CD14-positive monocyte (primary cell): ENCODE measurements at regions of chr15 and their contacts with region 1.

Region 1: GRCh38 chr15:52445553-52445952 is 83.1 kb downstream of the MYO5A start:
- DNase-seq: peak; percentile 24 to 46 (median 43)
- H3K4me3 ChIP-seq: peak overlapping the region in 1 of 3 experiments; percentile 12
- H3K4me3 Mint-ChIP-seq: no peak overlapping the region
- H3K27ac ChIP-seq: peak overlapping the region; percentile 6 to 53
- H3K27ac Mint-ChIP-seq: peak overlapping the region; percentile 47 to 84 (median 75)
- H3K4me1 ChIP-seq: peaks cover 49 to 66% of the 10 kb centered on the region in 2 donors
- H3K4me1 Mint-ChIP-seq: peaks cover 72% of the 10 kb centered on the region
- H3K27me3 ChIP-seq: no peaks in the 10 kb centered on the region
- H3K27me3 Mint-ChIP-seq: no peaks in the 10 kb centered on the region
- CTCF ChIP-seq: no peak

Region 2: DNA sequence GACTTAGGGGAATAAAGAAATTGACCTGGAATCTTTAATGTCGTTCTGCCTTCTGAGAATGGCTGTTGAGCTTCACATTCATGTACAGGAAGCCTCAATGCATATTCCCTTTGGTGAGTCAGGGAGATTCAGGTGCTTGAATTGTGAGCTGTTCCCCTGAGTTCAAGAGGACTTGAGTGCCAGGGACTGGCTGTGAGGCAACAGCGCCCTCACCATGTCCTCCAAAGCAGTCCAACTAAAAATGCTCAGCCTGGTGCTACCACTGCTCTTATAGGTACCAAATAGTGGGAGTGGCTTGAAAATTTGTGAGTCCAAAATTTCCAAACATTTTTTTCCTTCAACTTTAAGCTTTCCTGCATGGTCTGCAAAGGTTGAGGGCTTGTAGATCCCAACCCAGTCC is 528.1 kb before region 1 on chr15:
- intact Hi-C with region 1: no loop called
- DNase-seq: no peak
- H3K4me3 ChIP-seq: no peak overlapping the region
- H3K4me3 Mint-ChIP-seq: no peak overlapping the region
- H3K27ac ChIP-seq: no peak overlapping the region
- H3K27ac Mint-ChIP-seq: no peak overlapping the region
- H3K4me1 ChIP-seq: no peaks in the 10 kb centered on the region
- H3K4me1 Mint-ChIP-seq: no peaks in the 10 kb centered on the region
- H3K27me3 ChIP-seq: no peaks in the 10 kb centered on the region
- H3K27me3 Mint-ChIP-seq: no peaks in the 10 kb centered on the region
- CTCF ChIP-seq: no peak

Region 3: DNA sequence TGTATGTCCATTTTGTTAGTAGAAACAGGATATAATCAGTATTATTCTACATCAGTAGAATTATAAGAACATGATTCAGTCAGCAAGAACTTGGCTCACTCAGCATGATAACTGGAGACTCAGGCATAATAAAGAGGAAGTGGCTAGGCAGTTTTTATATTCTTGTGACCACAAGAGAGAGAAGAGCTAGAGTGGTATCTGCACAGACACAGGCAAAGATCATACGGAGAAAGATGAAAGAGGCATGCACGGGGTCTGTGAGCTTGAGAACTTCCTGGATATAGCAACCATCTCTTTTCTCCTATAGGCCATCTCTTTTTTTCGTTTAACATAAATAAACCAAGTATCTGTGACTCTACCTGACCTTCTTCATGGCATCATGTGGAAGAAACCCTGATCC is 36.4 kb after region 1 on chr15:
- intact Hi-C with region 1: loop called in 1 of 2 experiments (anchors 5 kb)
- DNase-seq: peak; percentile 58 to 77 (median 65)
- H3K4me3 ChIP-seq: peak overlapping the region in 1 of 3 experiments; percentile 22
- H3K4me3 Mint-ChIP-seq: no peak overlapping the region
- H3K27ac ChIP-seq: peak overlapping the region in 1 of 2 donors; percentile 29
- H3K27ac Mint-ChIP-seq: peak overlapping the region in 4 of 7 donors; percentile 38 to 85 (median 48)
- H3K4me1 ChIP-seq: peaks cover 40 to 44% of the 10 kb centered on the region in 2 donors
- H3K4me1 Mint-ChIP-seq: peaks cover 58% of the 10 kb centered on the region
- H3K27me3 ChIP-seq: no peaks in the 10 kb centered on the region
- H3K27me3 Mint-ChIP-seq: peaks cover 0 to 2% (median 0%) of the 10 kb centered on the region in 3 donors
- CTCF ChIP-seq: no peak

Region 4: DNA sequence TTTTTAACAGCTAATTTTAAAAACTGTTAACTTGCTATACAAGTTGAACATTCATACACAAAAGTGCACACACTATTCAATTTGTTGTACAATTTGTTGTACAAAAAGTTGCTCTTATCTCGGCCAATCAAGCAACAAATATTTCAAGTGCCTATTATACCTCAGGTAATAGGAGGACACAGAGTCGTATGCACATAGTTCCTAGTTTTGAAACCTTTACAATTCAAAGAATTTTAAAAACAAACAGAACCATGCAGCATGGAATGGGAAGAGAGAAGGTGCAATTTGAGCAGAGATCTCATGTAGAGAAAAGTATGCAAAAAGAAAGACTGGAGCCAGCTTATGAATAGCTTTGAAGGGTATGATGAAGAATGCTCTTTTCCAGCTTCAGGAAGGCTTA is 169.7 kb after region 1 on chr15:
- intact Hi-C with region 1: no loop called
- DNase-seq: no peak
- H3K4me3 ChIP-seq: no peak overlapping the region
- H3K4me3 Mint-ChIP-seq: no peak overlapping the region
- H3K27ac ChIP-seq: no peak overlapping the region
- H3K27ac Mint-ChIP-seq: no peak overlapping the region
- H3K4me1 ChIP-seq: no peaks in the 10 kb centered on the region
- H3K4me1 Mint-ChIP-seq: no peaks in the 10 kb centered on the region
- H3K27me3 ChIP-seq: no peaks in the 10 kb centered on the region
- H3K27me3 Mint-ChIP-seq: no peaks in the 10 kb centered on the region
- CTCF ChIP-seq: no peak